Activated B cell treated with CpG ODN at 0.5 μM for 24 hours (primary cell): ENCODE measurements at regions of chr3 and their contacts with region 1.

Region 1: DNA sequence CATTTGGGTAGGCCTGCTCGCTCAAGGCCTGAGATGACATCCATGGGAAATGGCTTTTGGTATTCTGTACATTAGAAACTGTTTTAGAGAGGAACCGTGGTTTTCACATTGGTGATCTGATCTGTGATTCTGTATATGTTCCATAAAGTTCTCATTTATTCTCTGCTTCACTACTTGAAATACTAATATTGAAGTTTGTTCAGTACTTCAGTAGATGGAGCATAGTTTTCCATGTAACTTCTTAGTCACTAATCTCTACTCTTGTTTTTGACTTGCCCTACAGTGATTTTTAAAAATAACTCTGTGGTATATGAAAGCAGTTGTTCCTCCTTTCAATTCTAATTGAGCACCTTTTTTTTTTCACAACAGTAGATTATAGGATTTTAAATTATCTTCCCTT is 66.5 kb downstream of the MBNL1 start:
- DNase-seq: no peak
- ATAC-seq: peak; percentile 30
- H3K4me3 Mint-ChIP-seq: peak overlapping the region; percentile 38
- H3K27ac Mint-ChIP-seq: peak overlapping the region; percentile 24
- H3K4me1 Mint-ChIP-seq: peaks cover 80% of the 10 kb centered on the region
- H3K27me3 Mint-ChIP-seq: no peaks in the 10 kb centered on the region
- CTCF ChIP-seq: no peak

Region 2: GRCh38 chr3:152323834-152324233 is 11.4 kb before region 1 on chr3:
- CTCF ChIA-PET with region 1: interaction called, 3 read pairs
- POLR2A ChIA-PET with region 1: no interaction called
- intact Hi-C with region 1: loop called (anchors 1 kb)
- DNase-seq: no peak
- ATAC-seq: peak; percentile 46
- H3K4me3 Mint-ChIP-seq: peak overlapping the region; percentile 50
- H3K27ac Mint-ChIP-seq: peak overlapping the region; percentile 19
- H3K4me1 Mint-ChIP-seq: peaks cover 66% of the 10 kb centered on the region
- H3K27me3 Mint-ChIP-seq: no peaks in the 10 kb centered on the region
- CTCF ChIP-seq: no peak

Region 3: GRCh38 chr3:152350139-152350538 is 14.9 kb after region 1 on chr3:
- CTCF ChIA-PET with region 1: no interaction called
- POLR2A ChIA-PET with region 1: interaction called, 3 read pairs
- intact Hi-C with region 1: loop called (anchors 1 kb)
- DNase-seq: no peak
- ATAC-seq: no peak
- H3K4me3 Mint-ChIP-seq: no peak overlapping the region
- H3K27ac Mint-ChIP-seq: no peak overlapping the region
- H3K4me1 Mint-ChIP-seq: peaks cover 29% of the 10 kb centered on the region
- H3K27me3 Mint-ChIP-seq: no peaks in the 10 kb centered on the region
- CTCF ChIP-seq: no peak

Region 4: DNA sequence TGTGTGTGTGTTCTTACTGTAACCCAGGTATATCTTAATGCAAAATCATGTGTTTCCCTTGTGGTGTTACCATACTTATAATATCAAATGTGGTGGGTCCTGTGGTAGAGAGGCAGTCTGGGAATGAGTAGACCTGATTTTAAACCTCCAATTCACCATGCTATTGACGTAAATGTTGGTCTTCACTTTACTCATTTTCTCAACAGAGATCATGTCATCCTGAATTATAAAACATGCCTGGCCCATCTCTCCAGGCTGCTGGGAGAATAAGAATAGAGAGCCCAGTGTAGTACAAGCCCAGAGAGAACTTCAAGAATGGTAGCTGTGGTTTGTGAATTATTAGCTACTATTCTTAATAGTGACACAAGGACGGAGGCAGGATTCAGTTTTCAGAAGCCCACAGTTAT is 21.6 kb after region 1 on chr3:
- CTCF ChIA-PET with region 1: no interaction called
- POLR2A ChIA-PET with region 1: interaction called, 3 read pairs
- intact Hi-C with region 1: loop called (anchors 2 kb)
- DNase-seq: no peak
- ATAC-seq: peak; percentile 51
- H3K4me3 Mint-ChIP-seq: no peak overlapping the region
- H3K27ac Mint-ChIP-seq: peak overlapping the region; percentile 70
- H3K4me1 Mint-ChIP-seq: peaks cover 74% of the 10 kb centered on the region
- H3K27me3 Mint-ChIP-seq: no peaks in the 10 kb centered on the region
- CTCF ChIP-seq: no peak

Region 5: DNA sequence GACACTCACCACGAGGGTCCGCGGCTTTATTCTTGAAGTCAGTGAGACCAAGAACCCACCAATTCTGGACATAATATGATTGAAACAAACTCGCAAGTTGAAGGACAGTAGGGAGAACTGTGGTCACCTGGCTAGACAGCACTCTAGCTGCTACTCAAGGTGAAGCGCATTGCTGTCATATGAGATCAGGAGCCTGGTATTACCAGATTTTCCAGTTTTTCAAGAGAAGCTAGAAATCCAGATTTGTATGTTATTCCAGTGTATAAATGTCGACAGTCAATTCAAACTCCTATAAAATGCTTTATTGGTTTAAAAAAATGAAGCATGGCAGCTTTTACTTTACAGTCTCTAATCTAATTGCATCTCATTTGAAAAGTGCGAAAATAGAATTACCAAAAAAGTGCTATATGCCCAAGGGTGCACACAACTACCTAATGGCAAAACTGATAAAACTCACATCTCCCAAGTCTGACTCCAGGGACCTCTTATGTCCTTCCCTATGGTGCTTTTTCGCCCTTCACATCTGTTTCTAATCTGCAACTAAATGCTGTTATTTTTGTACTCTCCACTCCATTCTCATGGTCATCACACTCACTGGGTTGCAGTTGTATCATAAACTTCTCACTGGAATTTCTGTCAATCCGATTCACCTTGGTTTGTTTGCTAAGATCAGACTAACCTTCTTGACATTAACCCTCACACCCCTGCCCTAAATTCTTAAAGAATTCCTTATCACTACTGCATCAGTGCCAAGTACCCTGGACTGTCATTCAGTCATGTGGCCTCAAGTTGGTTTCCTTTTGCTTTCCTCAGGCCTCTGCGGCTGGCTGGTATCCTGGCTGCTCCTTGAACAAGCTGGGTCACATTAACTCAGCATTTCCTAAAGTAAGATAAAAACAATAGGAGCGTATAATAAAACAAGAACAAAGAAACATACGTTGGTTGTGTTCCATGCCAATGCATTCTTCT is 1754.5 kb after region 1 on chr3:
- CTCF ChIA-PET with region 1: no interaction called
- POLR2A ChIA-PET with region 1: no interaction called
- intact Hi-C with region 1: no loop called
- DNase-seq: no peak
- ATAC-seq: no peak
- H3K4me3 Mint-ChIP-seq: no peak overlapping the region
- H3K27ac Mint-ChIP-seq: no peak overlapping the region
- H3K4me1 Mint-ChIP-seq: no peaks in the 10 kb centered on the region
- H3K27me3 Mint-ChIP-seq: peaks cover 4% of the 10 kb centered on the region
- CTCF ChIP-seq: no peak